ENCODE measurements at regions of chr22 and their contacts with region 1.

Region 1: DNA sequence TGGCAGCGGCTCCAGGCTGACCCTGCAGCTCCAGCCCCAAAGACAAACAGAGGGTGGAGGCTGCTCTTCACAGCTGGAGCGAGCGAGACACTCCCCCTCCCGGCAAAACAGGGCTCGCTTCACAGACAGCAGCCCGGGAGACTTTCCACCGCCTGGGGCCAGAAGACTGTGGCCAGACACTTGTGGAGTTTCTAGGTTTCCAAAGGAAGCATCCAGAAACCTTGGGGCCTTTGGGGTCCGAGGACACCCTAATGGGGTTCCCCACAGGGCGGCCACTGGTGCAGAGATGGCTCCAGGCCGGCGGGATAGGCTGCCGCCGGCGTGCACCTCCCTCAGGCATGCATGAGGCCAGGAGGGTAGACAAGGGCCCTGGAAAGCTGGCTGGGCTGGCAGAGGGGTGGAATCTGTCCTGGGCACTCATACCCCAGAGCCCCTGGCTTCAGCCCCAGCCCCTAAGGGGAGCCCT is at the start of gene IL17REL:
- DNase-seq: peak in 1 of 2 experiments; percentile 54
- H3K4me3 ChIP-seq: no peak within 1 kb of the TSS
- H3K27ac ChIP-seq: no peak within 1 kb of the TSS
- H3K4me1 ChIP-seq: peaks cover 0 to 25% (median 16%) of the 10 kb centered on the region in 4 experiments; a peak in 6 of 7 replicates
- H3K27me3 ChIP-seq: peaks cover 21 to 60% (median 46%) of the 10 kb centered on the region in 4 experiments
- CTCF ChIP-seq: no peak
- EP300 ChIP-seq: no peak
- POLR2A ChIP-seq: no peak
- RAD21 ChIP-seq: no peak
- total RNA-seq, gene IL17REL: 0.08 and 0.20 TPM in 2 replicates

Region 2: GRCh38 chr22:49930739-49931412 is 81.9 kb before region 1 on chr22:
- CTCF ChIA-PET with region 1: interaction called, 11 read pairs
- POLR2A ChIA-PET with region 1: interaction called, 3 read pairs
- DNase-seq: no peak
- H3K4me3 ChIP-seq: no peak overlapping the region
- H3K27ac ChIP-seq: no peak overlapping the region
- H3K4me1 ChIP-seq: peaks cover 0 to 8% (median 1%) of the 10 kb centered on the region in 4 experiments; a peak in 2 of 7 replicates
- H3K27me3 ChIP-seq: peaks cover 0 to 12% (median 10%) of the 10 kb centered on the region in 4 experiments; a peak in 6 of 7 replicates
- CTCF ChIP-seq: peak in 2 of 3 experiments; percentile 61 to 62; a peak in 3 of 4 replicates
- EP300 ChIP-seq: no peak
- POLR2A ChIP-seq: no peak
- RAD21 ChIP-seq: peak; percentile 64 to 73

Region 3: GRCh38 chr22:49979587-49980264 is 33.0 kb before region 1 on chr22:
- CTCF ChIA-PET with region 1: interaction called, 10 read pairs
- POLR2A ChIA-PET with region 1: no interaction called
- DNase-seq: peak in 1 of 2 experiments; percentile 57
- H3K4me3 ChIP-seq: no peak overlapping the region
- H3K27ac ChIP-seq: no peak overlapping the region
- H3K4me1 ChIP-seq: peaks cover 0 to 4% (median 0%) of the 10 kb centered on the region in 4 experiments; a peak in 1 of 7 replicates
- H3K27me3 ChIP-seq: peaks cover 4 to 18% (median 13%) of the 10 kb centered on the region in 4 experiments
- CTCF ChIP-seq: peak; percentile 47 to 90 (median 57)
- EP300 ChIP-seq: no peak
- POLR2A ChIP-seq: no peak
- RAD21 ChIP-seq: peak; percentile 33 to 55; a peak in 3 of 4 replicates

Region 4: DNA sequence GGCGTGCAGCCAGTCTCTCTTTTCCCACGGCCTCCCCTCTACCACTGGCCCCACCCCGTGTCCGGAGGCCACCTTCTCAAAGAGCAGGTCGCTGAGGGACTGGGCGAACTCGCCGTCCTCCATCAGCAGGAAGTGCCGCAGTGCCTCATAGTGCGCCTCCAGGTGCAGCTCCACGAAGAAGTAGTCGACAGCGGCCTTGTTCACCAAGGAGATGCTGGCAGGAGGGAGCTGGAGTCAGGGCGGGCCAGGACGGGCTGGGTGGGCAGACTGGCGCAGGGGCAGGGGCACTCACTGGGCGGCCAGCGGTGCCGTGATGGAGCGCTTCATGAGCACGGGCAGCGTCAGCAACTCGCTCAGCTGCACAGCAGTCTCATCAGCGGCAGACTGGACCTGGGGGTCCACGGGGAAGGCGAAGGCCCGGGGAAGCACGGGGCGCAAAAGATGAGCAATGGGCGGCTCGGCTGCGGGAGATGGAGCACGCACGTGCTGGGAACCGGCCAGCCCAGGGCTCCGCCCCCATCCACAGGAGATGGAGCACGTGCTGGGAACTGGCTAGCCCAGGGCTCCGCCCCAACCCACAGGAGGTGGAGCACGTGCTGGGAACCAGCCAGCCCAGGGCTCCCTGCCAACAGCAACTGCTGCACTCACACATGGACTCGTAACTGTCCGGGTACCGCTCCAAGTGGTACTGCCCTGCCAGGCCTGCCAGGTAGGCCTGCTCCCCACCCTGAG is 206.4 kb after region 1 on chr22:
- CTCF ChIA-PET with region 1: no interaction called
- POLR2A ChIA-PET with region 1: no interaction called
- DNase-seq: peak; percentile 25 to 76
- H3K4me3 ChIP-seq: no peak overlapping the region
- H3K27ac ChIP-seq: no peak overlapping the region
- H3K4me1 ChIP-seq: peaks cover 0 to 11% (median 2%) of the 10 kb centered on the region in 4 experiments; a peak in 3 of 7 replicates
- H3K27me3 ChIP-seq: no peaks in the 10 kb centered on the region
- CTCF ChIP-seq: no peak
- EP300 ChIP-seq: no peak
- POLR2A ChIP-seq: no peak; a peak in 1 of 3 replicates
- RAD21 ChIP-seq: no peak

Measured in H1 (cell line).